Calu3 (cell line): ENCODE measurements at regions of chr2 and their contacts with region 1.

Region 1: DNA sequence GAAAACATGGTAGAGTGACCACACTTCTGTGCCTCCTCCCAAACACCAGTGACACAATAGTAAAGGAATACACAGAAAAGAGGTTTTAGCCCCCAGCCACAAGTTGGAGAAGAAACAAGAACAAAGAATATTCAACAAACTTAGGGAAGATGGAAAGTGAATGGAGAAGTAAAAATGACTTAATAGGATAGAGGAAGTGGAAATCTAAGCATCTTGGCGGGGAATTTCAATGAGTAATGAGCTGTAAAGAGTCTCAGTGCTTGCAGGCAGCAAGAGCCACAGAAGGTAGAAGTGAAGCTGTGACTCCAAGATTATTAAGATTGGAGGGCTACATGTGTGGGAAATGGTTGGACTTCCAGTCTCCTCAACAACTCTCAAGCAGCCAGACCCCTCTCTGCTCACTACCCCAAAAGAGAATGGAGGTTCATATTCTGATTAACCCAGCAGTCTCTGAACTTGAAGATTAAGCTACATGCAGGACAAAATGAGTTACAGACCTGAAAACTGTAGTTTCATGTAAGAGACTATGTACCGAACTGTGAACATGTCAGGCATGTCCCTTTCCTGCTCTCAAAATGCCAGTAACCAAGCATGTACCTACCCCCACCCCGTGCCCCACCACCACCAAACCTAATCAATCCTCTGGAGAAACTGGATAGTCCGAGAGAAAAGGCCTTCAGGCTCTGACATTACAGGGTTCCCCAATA is 16.9 kb upstream of the HNRNPLL start:
- DNase-seq: no peak
- H3K4me3 Mint-ChIP-seq: no peak overlapping the region
- H3K27ac Mint-ChIP-seq: no peak overlapping the region
- H3K4me1 Mint-ChIP-seq: no peaks in the 10 kb centered on the region
- H3K27me3 Mint-ChIP-seq: peaks cover 9% of the 10 kb centered on the region
- CTCF ChIP-seq: no peak

Region 2: GRCh38 chr2:38454081-38454480 is 165.5 kb before region 1 on chr2:
- CTCF ChIA-PET with region 1: no interaction called
- intact Hi-C with region 1: no loop called
- DNase-seq: no peak
- H3K4me3 Mint-ChIP-seq: no peak overlapping the region
- H3K27ac Mint-ChIP-seq: no peak overlapping the region
- H3K4me1 Mint-ChIP-seq: peaks cover 9% of the 10 kb centered on the region
- H3K27me3 Mint-ChIP-seq: no peaks in the 10 kb centered on the region
- CTCF ChIP-seq: no peak

Region 3: DNA sequence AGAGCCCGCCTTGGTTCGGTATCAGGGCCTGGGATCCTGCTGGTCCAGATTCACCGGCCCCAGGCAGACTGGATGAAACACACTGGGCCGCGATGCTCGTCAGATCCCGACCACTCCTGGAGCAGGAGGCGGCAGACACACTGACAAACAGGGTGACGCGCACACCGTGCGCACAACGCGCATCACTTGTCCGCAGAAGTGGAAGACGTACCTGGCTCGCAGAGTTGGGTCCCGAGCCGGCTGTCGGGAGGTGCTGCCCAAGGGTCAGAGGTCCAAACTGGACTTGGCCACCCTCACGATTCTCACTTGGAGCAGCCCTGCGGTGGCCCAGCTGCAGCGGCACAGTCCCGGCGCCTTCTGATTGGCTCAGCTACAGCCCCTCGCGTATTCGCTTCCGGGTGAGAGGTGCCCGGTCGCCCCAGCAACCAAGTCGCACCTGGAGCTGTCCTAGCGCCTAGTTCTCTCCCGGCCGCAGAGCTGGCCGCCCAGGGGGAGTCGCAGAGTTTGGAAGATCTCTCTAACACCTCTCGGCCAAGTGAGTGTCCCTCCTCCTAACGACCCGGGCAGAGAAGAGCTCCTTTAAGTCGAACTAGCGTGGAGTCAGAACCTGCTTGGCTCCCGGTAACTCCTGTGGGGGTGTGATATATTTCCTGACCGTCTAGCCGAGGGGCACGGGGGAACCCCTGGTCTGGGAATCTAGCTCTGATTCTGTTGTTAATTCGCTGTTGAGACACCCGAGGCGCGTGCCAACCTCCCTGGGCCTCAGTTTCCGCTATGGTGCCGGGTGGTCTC is 256.2 kb after region 1 on chr2 and contains the starts of genes DHX57 and MORN2:
- CTCF ChIA-PET with region 1: interaction called, 10 read pairs
- intact Hi-C with region 1: no loop called
- DNase-seq: peak; percentile 88
- H3K4me3 Mint-ChIP-seq: peak within 1 kb of the TSS; percentile 99
- H3K27ac Mint-ChIP-seq: peak within 1 kb of the TSS; percentile 96
- H3K4me1 Mint-ChIP-seq: peaks cover 16% of the 10 kb centered on the region
- H3K27me3 Mint-ChIP-seq: no peaks in the 10 kb centered on the region
- CTCF ChIP-seq: no peak
- total RNA-seq, gene DHX57: 14.3 and 20.3 TPM in 2 replicates
- total RNA-seq, gene MORN2: 12.9 and 15.1 TPM in 2 replicates